ENCODE measurements at regions of chr22 and their contacts with region 1.

Region 1: GRCh38 chr22:20568989-20569769 is 61.8 kb downstream of the MED15 start:
- DNase-seq: peak; percentile 96
- H3K4me3 Mint-ChIP-seq: peak overlapping the region; percentile 59
- H3K27ac Mint-ChIP-seq: peak overlapping the region; percentile 94
- H3K4me1 Mint-ChIP-seq: peaks cover 37% of the 10 kb centered on the region
- H3K27me3 Mint-ChIP-seq: no peaks in the 10 kb centered on the region
- CTCF ChIP-seq: no peak

Region 2: DNA sequence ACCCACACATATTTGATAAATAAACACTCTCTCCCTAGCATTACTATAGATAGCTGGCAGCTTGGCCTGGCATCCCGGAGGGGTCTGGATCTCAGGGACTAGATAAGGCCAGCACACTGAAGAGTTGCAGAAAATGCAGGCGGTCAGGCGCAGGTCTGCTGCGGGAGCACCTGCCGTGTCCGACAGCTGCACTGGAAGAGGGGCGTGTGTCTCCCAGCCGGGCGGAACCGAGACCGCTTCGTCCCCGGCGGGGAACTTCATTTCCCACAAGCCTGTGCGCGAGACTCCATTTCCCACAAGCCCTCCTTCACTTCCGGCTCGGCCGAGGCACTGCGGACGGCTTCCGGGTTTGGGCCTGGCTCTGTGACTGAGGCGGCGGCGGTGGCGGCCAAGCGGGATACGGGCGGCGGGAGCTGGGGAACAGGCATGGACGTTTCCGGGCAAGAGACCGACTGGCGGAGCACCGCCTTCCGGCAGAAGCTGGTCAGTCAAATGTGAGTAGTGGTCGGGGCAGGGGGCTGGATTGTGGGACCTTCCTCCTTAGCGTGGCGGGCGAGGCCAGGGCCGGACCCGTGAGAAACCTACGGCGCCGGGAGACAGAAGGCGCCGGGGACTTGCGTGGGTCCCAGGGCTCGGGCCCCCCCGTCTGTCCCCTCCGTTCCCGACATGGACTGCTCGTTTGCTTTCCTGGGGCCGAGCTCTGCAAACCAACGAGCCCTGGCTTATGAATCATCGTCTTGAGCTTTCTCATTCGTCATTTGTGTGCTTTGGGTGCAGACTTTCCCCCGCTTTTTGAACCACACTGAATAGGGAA is 61.7 kb before region 1 on chr22 and contains the start of gene MED15:
- CTCF ChIA-PET with region 1: interaction called, 11 read pairs
- POLR2A ChIA-PET with region 1: interaction called, 74 read pairs
- intact Hi-C with region 1: loop called (anchors 2 kb)
- DNase-seq: peak; percentile 87
- H3K4me3 Mint-ChIP-seq: peak within 1 kb of the TSS; percentile 90
- H3K27ac Mint-ChIP-seq: peak within 1 kb of the TSS; percentile 99
- H3K4me1 Mint-ChIP-seq: peaks cover 50% of the 10 kb centered on the region
- H3K27me3 Mint-ChIP-seq: no peaks in the 10 kb centered on the region
- CTCF ChIP-seq: no peak
- total RNA-seq, gene MED15: 122 TPM in 2 replicates

Region 3: GRCh38 chr22:20550821-20551744 is 18.1 kb before region 1 on chr22:
- CTCF ChIA-PET with region 1: interaction called, 29 read pairs
- POLR2A ChIA-PET with region 1: interaction called, 5 read pairs
- intact Hi-C with region 1: no loop called
- DNase-seq: no peak
- H3K4me3 Mint-ChIP-seq: no peak overlapping the region
- H3K27ac Mint-ChIP-seq: peak overlapping the region; percentile 35
- H3K4me1 Mint-ChIP-seq: peaks cover 24% of the 10 kb centered on the region
- H3K27me3 Mint-ChIP-seq: no peaks in the 10 kb centered on the region
- CTCF ChIP-seq: no peak

Region 4: DNA sequence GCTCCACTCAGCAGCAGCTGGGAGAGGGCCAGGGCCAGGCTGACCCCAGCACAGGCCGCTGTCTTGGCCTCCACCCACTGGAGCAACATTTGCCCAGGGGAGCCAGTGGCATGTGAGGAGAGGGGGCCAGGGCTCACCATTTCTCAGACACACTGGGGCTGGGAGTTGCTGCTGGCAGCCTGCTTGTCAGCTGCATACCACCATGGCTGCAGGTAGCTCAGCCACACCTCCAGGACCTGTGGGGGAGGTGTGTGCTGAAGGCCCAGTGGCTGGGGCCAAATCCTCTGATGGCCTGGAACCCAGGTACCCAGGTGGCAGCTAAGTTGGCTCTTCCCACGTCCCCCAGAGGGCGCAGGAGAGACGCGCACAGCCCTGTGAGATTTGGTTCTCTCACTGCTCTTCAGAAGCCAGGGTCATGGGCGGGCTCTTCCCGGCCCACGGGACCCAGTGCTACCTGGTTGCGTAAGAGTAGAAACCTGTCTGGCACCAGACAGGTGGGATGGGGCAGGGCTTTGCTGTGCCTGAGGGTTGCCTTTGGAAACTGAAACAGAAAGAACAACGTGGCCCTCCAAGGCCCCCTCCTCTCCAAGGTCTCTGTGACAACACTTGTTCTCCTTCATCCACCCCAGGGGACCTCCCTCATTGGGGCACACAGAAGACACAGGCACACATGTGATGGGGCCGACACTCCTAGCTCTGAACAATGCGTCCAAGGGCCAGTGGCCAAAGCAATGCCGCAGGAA is 37.0 kb after region 1 on chr22:
- CTCF ChIA-PET with region 1: interaction called, 15 read pairs
- POLR2A ChIA-PET with region 1: no interaction called
- intact Hi-C with region 1: no loop called
- DNase-seq: peak; percentile 86
- H3K4me3 Mint-ChIP-seq: no peak overlapping the region
- H3K27ac Mint-ChIP-seq: no peak overlapping the region
- H3K4me1 Mint-ChIP-seq: peaks cover 6% of the 10 kb centered on the region
- H3K27me3 Mint-ChIP-seq: no peaks in the 10 kb centered on the region
- CTCF ChIP-seq: peak; percentile 80

Region 5: DNA sequence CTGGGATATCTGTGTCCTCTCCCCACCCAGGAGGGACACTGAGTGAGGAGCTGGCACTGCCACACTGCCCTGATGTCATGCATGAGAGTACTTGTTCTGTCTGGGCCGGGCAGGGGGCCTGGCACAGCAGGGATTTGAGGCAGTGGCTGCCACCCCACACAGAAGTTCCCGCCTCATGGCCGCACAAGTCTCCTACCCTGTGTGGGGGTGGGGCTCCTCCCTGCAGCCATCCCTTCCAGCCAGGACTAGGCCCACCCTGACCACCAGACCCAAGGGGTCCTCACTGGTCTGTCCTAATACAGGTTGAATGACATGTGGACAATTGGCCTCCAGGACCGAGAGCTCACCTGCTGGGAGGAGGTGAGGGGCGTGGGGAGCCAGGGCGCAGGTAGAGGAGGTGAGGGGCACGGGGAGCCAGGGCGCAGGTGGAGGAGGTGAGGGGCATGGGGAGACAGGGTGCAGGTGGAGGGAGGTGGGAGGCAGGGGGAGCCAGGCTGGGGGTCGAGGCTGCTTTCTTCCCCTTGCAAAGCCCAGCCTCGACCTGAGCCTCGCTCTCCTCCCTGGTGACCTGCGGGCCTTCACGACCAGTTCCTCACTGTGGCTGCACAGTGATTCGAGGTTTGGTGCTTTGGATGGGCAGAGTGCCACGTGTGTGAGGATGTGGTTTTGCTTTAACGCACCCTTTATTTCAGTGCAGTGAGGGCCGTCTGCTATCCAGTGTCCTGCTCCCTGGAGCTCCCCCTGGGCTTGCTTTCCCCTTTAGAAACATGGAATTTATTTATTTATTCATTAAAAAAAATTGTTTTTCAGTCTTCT is 420.4 kb after region 1 on chr22:
- CTCF ChIA-PET with region 1: no interaction called
- POLR2A ChIA-PET with region 1: no interaction called
- intact Hi-C with region 1: no loop called
- DNase-seq: no peak
- H3K4me3 Mint-ChIP-seq: no peak overlapping the region
- H3K27ac Mint-ChIP-seq: no peak overlapping the region
- H3K4me1 Mint-ChIP-seq: no peaks in the 10 kb centered on the region
- H3K27me3 Mint-ChIP-seq: no peaks in the 10 kb centered on the region
- CTCF ChIP-seq: no peak

Measured in MCF 10A (cell line).